ENCODE measurements at regions of chr9 and their contacts with region 1.

Region 1: DNA sequence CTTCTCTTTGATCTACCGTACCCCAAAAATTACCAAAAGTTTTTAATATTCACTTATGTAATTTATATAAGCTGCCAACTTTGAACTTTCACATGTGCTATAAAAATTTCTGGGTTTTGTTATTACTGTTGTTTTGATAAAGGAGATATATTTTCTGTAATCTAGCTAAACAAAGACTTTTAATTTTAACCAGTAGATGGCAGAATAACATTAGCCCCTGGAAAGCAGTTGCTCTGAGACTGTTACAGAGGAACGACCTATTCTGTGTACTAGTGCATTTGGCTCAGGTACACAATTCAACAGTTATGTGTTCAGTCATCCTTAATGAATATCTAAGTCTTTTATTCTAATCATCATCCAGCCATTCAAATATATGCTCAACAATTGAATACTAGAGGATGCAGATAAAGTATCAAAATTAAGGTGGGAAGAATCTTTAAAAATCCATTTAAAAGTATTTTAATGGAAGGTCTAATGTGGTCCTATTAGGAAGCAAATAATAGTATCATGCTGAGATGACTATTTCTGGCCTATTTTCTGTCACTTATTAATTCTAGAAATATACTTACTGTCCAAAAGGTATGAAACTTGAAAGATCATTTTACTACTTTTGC is 8.6 kb downstream of the KLHL9 start:
- DNase-seq: no peak
- H3K4me3 Mint-ChIP-seq: no peak overlapping the region
- H3K27ac Mint-ChIP-seq: no peak overlapping the region
- H3K4me1 Mint-ChIP-seq: peaks cover 29% of the 10 kb centered on the region
- H3K27me3 Mint-ChIP-seq: no peaks in the 10 kb centered on the region

Region 2: DNA sequence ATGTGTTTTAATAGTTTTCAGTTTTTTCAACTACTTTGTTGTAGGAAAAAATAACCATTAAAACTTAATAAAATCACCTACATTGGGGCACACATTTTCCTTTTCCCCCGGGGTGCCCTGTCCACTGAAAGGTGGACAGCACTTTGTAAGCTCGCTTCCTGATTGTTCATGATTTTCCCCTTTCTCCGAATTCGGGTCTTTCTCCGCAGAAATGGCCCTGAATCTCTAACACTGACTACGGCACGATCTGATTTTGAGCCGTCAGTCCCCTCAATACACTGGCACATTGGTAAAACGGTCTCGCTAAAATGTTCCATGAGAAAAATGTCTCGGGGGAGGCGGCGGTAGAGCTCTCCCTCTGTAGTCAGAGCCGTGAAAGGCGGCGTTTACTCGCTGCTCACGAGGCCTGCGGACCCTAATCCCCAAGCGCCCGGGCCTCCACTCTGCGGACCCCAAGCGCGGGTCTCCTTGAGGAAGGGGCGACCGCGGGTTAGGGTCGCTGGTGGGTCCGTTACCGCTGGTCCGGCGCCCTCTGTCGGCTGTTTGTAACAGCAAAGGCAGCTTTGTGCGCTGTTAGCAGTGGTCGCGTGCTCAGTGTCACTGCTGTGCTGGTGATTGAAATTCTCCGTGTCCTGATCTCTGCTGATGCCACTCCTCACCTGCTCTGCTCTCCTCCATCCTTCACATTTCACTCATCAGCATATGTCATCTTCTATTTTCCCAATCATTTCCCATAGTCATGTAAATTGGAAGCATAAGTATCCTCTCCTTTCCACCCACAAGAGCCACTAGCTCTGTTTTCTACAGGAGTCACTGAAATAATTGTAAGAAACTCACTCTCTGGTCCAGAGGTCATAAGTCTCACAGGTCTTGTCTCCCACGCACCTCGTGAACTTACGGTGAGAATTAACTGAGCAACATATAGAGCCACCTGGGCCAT is 69.4 kb after region 1 on chr9:
- intact Hi-C with region 1: loop called (anchors 1 kb)
- DNase-seq: peak; percentile 28
- H3K4me3 Mint-ChIP-seq: peak overlapping the region; percentile 78
- H3K27ac Mint-ChIP-seq: no peak overlapping the region
- H3K4me1 Mint-ChIP-seq: peaks cover 10% of the 10 kb centered on the region
- H3K27me3 Mint-ChIP-seq: peaks cover 64% of the 10 kb centered on the region

Region 3: DNA sequence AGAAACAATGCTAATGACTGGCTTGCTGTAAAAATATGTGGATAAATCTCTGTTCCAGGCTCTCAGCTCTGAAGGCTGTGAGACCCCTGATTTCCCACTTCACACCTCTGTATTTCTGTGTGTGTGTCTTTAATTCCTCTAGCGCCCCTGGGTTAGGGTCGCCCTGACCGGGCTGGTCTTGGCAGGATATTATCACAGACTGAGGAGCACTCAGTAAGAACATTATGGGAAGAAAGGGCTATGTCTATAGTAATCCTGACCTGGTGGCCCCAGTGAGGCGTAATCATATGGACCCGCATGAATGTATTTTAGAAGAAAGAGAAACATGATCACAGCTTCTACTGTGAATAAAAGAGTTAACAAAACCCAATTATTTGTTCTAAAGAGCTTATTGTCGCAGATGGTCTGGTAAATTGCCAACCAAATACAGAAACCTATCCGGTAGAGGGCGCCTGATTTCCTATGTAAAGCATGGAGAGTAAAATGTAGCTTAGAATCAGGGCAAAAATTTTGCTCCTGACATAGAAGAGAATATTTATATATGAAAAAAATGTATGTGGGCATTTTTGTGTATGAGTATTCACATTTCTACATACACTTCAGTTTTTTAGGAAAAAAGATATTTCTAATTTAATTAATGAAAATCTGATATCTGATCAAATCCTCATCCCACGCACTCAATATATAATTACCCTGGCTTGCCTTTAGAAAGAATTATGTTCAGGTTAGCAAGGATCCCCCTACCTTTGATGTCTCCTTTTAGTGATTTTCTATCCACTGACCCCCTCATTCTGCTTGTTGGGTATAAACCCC is 107.8 kb after region 1 on chr9:
- intact Hi-C with region 1: loop called (anchors 1 kb)
- DNase-seq: no peak
- H3K4me3 Mint-ChIP-seq: no peak overlapping the region
- H3K27ac Mint-ChIP-seq: no peak overlapping the region
- H3K4me1 Mint-ChIP-seq: no peaks in the 10 kb centered on the region
- H3K27me3 Mint-ChIP-seq: peaks cover 43% of the 10 kb centered on the region

Region 4: DNA sequence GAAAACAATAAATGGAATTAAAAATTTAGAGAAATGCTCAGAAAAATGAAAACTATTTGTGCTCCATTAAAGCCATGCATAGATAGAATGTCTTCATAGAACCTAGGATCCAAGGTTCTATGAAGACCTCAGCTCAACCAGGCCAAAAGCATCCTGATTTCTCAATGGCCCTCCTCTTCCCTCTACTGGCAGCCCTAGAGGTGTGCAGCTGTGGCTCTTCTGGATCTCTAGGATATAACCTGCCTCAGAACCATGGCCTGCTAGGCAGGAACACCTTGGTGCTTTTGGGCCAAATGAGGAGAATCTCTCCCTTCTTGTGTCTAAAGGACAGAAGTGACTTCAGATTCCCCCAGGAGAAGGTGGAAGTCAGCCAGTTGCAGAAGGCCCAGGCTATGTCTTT is 128.7 kb after region 1 on chr9:
- intact Hi-C with region 1: loop called (anchors 1 kb)
- DNase-seq: no peak
- H3K4me3 Mint-ChIP-seq: no peak overlapping the region
- H3K27ac Mint-ChIP-seq: no peak overlapping the region
- H3K4me1 Mint-ChIP-seq: no peaks in the 10 kb centered on the region
- H3K27me3 Mint-ChIP-seq: peaks cover 28% of the 10 kb centered on the region

Region 5: GRCh38 chr9:21559424-21560280 is 233.0 kb after region 1 on chr9:
- intact Hi-C with region 1: loop called (anchors 5 kb)
- DNase-seq: peak; percentile 16
- H3K4me3 Mint-ChIP-seq: peak overlapping the region; percentile 85
- H3K27ac Mint-ChIP-seq: no peak overlapping the region
- H3K4me1 Mint-ChIP-seq: peaks cover 17% of the 10 kb centered on the region
- H3K27me3 Mint-ChIP-seq: peaks cover 56% of the 10 kb centered on the region